Calu3 (cell line): ENCODE measurements at regions of chr1 and their contacts with region 1.

Region 1: DNA sequence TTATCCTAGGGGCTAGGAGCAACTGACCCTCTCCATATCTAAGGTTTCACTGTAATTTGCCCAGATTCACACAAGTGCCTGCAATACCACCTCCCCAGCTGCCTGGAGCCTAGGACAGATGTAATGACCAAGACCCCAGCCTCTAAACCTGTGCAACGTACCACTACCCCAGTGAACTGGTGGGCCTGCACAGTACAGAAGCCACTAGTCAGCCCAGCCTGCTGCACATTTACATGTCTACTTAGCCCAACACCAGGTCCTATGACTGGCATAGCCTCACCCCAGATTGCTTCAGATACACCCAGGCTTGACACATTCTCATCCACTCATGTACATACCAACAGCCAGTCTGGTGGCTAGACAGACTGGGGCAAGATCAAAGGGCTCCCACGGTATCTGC is 1336.6 kb downstream of the BRINP3 start:
- DNase-seq: no peak
- H3K4me3 Mint-ChIP-seq: no peak overlapping the region
- H3K27ac Mint-ChIP-seq: no peak overlapping the region
- H3K4me1 Mint-ChIP-seq: no peaks in the 10 kb centered on the region
- H3K27me3 Mint-ChIP-seq: no peaks in the 10 kb centered on the region
- CTCF ChIP-seq: no peak

Region 2: DNA sequence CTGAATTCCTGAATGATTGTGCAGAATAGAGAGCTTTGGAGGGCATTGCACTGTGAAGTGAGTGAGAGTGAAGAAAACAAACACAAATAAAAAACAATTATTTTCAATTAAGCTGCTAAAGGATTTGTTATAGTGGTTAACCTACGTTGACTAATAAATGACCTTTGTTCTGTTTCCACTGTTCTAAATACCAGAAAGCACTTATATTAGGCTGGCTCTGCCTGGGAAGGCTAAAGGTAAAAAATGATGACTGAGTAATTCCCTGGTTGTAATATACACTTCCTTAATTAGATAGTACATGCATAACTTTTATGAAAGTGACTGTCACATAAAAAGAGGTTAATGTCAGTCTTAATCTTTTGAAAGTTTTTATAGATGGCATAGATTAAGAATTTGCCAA is 651.3 kb before region 1 on chr1:
- CTCF ChIA-PET with region 1: no interaction called
- intact Hi-C with region 1: loop called (anchors 5 kb)
- DNase-seq: no peak
- H3K4me3 Mint-ChIP-seq: no peak overlapping the region
- H3K27ac Mint-ChIP-seq: peak overlapping the region; percentile 7
- H3K4me1 Mint-ChIP-seq: peaks cover 9% of the 10 kb centered on the region
- H3K27me3 Mint-ChIP-seq: no peaks in the 10 kb centered on the region
- CTCF ChIP-seq: no peak

Region 3: GRCh38 chr1:189192741-189193520 is 51.9 kb after region 1 on chr1:
- CTCF ChIA-PET with region 1: no interaction called
- intact Hi-C with region 1: no loop called
- DNase-seq: no peak
- H3K4me3 Mint-ChIP-seq: no peak overlapping the region
- H3K27ac Mint-ChIP-seq: no peak overlapping the region
- H3K4me1 Mint-ChIP-seq: no peaks in the 10 kb centered on the region
- H3K27me3 Mint-ChIP-seq: no peaks in the 10 kb centered on the region
- CTCF ChIP-seq: no peak

Region 4: GRCh38 chr1:189336115-189337100 is 195.4 kb after region 1 on chr1:
- CTCF ChIA-PET with region 1: no interaction called
- intact Hi-C with region 1: no loop called
- DNase-seq: no peak
- H3K4me3 Mint-ChIP-seq: no peak overlapping the region
- H3K27ac Mint-ChIP-seq: no peak overlapping the region
- H3K4me1 Mint-ChIP-seq: no peaks in the 10 kb centered on the region
- H3K27me3 Mint-ChIP-seq: no peaks in the 10 kb centered on the region
- CTCF ChIP-seq: no peak